Psoas muscle (tissue), 8 donors: ENCODE measurements at regions of chr3 and their contacts with region 1.

Region 1: DNA sequence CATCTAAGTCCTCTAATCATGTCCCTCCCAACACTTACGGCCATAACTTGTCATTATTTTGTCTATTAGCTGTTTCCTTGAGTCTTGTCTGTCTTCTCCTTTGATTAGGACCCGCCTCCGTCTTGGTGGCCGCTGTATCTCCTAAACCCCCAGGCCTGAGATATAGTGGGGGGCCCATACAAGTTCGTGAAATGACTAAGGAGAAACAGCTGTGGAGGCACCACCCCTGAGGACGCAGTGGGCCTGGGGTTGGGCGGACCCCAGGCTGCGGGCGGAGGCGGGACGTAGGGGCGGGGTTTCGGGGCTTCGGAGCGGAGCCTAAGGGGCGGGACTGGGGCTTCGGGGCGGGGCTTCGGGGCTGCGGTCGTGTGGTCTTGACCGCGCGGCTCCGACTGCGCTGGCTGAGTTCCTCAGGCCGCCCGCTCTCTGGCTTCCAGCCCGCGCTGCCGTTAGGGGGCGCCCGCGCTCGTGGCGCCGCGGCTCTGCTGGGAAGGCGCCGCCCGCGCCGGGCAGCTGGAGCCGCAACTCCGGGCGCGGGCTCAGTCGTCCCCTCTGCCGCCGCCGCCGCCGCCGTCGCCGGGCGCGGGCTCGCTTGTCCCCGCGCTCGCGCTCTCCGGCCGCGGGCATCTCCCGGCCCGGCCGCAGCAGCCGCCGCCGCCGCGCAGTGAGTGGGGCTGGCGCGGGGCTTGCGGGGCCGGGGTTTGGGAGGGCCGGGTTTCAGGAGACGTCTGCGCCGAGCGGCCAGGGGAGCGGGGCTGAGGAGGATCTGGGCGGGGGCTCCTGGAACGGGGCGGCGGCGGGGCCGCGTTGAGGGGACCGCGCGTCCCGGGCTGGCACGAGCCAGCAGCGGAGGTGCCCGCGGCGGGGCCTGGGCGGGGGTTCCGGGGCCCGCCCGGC is at the start of gene KCTD6:
- DNase-seq: peak; percentile 94 to 97
- ATAC-seq: peak; percentile 96 to 97 (median 96)
- H3K4me3 ChIP-seq: peak within 1 kb of the TSS; percentile 88
- H3K27ac ChIP-seq: peak within 1 kb of the TSS; percentile 79
- H3K4me1 ChIP-seq: peaks cover 43% of the 10 kb centered on the region
- H3K27me3 ChIP-seq: no peaks in the 10 kb centered on the region
- CTCF ChIP-seq: peak; percentile 68
- total RNA-seq, gene KCTD6: 5.8 to 11.0 (median 6.9) TPM

Region 2: GRCh38 chr3:58305882-58306711 is 185.7 kb before region 1 on chr3 and contains the starts of genes HTD2 and RPP14:
- intact Hi-C with region 1: loop called in 1 of 2 experiments (anchors 2 kb)
- DNase-seq: peak; percentile 98 to 100
- ATAC-seq: peak; percentile 93 to 95 (median 94)
- H3K4me3 ChIP-seq: peak within 1 kb of the TSS; percentile 81
- H3K27ac ChIP-seq: peak within 1 kb of the TSS; percentile 92
- H3K4me1 ChIP-seq: peaks cover 27% of the 10 kb centered on the region
- H3K27me3 ChIP-seq: no peaks in the 10 kb centered on the region
- CTCF ChIP-seq: peak; percentile 96
- total RNA-seq, gene HTD2: 12.0 to 17.9 (median 15.8) TPM
- total RNA-seq, gene RPP14: 24.9 to 35.0 (median 30.0) TPM

Region 3: DNA sequence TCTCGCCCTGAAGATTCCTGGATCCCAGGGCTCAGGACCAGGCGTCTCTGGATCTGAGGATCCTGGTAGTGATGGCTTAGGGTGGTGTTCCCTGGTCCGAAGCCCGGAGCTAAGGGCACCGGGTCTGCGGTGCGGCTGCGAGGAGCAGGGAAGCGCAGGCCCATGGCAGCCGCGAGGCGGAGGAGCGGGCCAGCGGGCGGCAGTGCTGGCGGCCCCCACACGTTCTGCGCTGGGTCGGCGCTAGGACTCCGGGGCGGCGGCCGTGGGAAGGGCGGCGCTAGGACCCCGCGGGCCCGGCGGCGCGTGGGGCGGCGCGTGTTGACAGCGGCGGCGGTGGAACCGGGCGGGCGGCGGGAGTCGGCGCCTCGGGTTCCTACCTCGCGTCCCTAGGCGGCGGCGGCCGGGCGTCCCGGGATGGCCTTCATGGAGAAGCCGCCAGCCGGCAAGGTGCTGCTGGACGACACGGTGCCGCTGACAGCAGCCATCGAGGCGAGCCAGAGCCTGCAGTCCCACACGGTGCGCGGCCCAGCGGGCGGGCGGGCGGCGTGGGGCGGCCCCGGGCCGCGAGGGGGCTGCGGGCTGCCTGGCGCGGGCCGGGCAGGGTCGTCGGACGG is 159.1 kb before region 1 on chr3 and contains the start of gene PXK:
- intact Hi-C with region 1: loop called (anchors 2 kb)
- DNase-seq: peak; percentile 88 to 91
- ATAC-seq: peak; percentile 95 to 98 (median 96)
- H3K4me3 ChIP-seq: peak within 1 kb of the TSS; percentile 70
- H3K27ac ChIP-seq: peak within 1 kb of the TSS; percentile 43
- H3K4me1 ChIP-seq: peaks cover 26% of the 10 kb centered on the region
- H3K27me3 ChIP-seq: no peaks in the 10 kb centered on the region
- CTCF ChIP-seq: no peak
- total RNA-seq, gene PXK: 15.5 to 17.5 (median 16.5) TPM

Region 4: DNA sequence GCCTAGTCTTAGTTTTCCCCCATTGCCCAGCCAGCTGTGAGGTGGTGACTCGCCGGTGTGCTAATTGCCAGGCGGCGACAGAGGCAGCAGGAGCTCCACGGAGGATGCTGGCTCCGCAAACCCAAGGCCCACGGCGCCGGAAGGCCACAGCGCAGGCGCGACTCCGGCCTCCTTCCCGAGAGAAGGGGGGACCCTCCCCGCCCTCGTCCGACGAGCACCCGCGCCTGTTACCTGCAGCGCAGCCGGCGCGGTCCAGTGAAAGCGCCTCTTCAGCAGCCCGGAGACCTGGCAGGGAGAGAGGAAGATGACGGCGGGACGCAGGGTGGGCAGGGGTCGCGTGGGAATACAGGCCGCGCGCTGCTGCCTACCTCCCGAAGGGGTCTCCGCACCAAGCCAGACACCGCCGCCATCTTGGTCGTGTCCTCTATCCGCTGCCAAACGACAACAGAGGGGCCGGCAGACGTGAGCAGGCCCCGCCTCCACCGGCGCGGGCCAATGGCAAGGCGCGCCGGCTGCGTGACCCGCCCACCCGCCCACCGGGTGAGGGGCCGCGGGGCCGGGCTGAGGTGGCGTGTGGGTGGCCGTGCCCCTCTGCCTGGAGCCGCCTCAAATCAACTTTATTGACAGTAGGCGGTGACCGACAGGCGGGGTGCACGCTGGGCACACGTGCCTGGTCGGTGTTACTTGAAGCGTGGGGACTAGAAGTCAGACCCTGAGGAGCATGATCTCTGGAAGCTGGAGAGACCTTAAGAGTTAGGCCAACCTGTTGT is 58.2 kb before region 1 on chr3 and contains the start of gene PDHB:
- intact Hi-C with region 1: loop called in 1 of 2 experiments (anchors 5 kb)
- DNase-seq: peak; percentile 95 to 97
- ATAC-seq: peak; percentile 97 to 98 (median 98)
- H3K4me3 ChIP-seq: peak within 1 kb of the TSS; percentile 92
- H3K27ac ChIP-seq: peak within 1 kb of the TSS; percentile 97
- H3K4me1 ChIP-seq: peaks cover 9% of the 10 kb centered on the region
- H3K27me3 ChIP-seq: no peaks in the 10 kb centered on the region
- CTCF ChIP-seq: no peak
- total RNA-seq, gene PDHB: 105 to 158 (median 128) TPM

Region 5: GRCh38 chr3:58463181-58463941 is 28.4 kb before region 1 on chr3:
- intact Hi-C with region 1: no loop called
- DNase-seq: peak; percentile 75 to 84
- ATAC-seq: peak; percentile 93 to 98 (median 96)
- H3K4me3 ChIP-seq: peak overlapping the region; percentile 33
- H3K27ac ChIP-seq: no peak overlapping the region
- H3K4me1 ChIP-seq: peaks cover 13% of the 10 kb centered on the region
- H3K27me3 ChIP-seq: no peaks in the 10 kb centered on the region
- CTCF ChIP-seq: peak; percentile 79